HepG2 (cell line): ENCODE measurements at regions of chr17 and their contacts with region 1.

Region 1: DNA sequence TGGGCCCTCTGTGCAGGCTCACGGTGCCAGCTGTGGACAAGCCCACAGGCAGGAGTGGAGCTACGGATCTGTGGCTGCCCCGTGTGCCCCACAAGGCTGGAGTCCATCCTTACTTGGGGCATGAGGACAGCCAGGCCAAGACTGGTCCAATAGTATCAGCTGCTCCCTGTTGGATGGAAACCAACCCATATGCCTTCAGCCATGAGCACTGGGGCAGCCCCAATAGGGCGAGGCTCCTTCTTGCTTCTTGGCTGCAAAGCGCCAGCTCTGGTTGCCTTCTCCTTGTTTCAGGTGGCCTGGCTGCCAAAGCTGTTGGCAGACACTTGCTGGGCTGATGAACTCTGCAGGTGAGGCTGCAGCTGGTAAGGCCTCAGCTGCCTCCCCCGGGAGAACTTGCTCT is 188.0 kb downstream of the ENGASE start:
- DNase-seq: no peak
- ATAC-seq: no peak
- H3K4me3 ChIP-seq: no peak overlapping the region
- H3K27ac ChIP-seq: no peak overlapping the region
- H3K4me1 ChIP-seq: no peaks in the 10 kb centered on the region
- H3K27me3 ChIP-seq: peaks cover 47 to 97% of the 10 kb centered on the region in 2 experiments
- CTCF ChIP-seq: no peak
- EP300 ChIP-seq: no peak
- POLR2A ChIP-seq: no peak
- RAD21 ChIP-seq: no peak

Region 2: DNA sequence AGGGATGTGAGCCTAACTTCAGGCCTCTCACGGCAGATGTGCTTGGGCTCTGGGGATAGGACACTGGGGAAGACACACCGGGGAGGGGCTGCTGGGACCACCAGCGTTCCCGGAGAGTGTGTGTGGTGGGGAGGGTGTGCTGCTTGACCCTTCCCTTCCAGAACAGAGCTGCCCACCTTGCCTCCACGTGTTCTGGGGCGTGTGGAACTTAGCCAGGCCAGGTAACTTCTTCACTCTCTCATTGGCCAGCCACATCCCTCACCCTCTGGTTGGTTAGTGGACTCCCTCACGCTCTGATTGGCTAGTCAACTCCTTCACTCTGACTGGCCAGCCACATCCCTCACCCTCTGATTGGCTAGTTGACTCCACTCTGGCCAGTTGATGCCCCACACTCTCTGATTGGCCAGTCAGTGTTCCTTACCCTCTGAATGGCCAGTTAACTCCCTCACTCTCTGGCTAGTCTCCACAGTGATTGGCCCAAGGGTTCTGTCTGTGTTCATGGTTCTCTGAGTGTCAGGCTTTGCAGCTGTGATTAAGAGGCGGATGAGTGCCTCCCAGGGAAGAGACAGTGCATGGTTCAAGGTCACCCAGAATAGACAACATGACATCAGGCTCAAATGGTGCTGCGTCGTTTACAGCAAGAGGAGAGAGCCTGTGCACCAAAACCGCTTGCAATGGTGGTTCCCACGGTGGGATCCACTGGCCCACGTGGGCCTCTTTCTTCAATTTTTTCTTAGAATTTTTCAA is 1021.2 kb before region 1 on chr17:
- CTCF ChIA-PET with region 1: no interaction called
- POLR2A ChIA-PET with region 1: no interaction called
- in situ Hi-C with region 1: no loop called
- intact Hi-C with region 1: loop called (anchors 10 kb)
- DNase-seq: peak; percentile 96
- ATAC-seq: peak; percentile 91
- H3K4me3 ChIP-seq: no peak overlapping the region
- H3K27ac ChIP-seq: no peak overlapping the region
- H3K4me1 ChIP-seq: peaks cover 53% of the 10 kb centered on the region
- H3K27me3 ChIP-seq: peaks cover 7 to 35% of the 10 kb centered on the region in 2 experiments; a peak in 4 of 5 replicates
- CTCF ChIP-seq: no peak
- EP300 ChIP-seq: peak in 1 of 2 experiments; percentile 57; a peak in 2 of 4 replicates
- POLR2A ChIP-seq: no peak
- RAD21 ChIP-seq: no peak

Region 3: DNA sequence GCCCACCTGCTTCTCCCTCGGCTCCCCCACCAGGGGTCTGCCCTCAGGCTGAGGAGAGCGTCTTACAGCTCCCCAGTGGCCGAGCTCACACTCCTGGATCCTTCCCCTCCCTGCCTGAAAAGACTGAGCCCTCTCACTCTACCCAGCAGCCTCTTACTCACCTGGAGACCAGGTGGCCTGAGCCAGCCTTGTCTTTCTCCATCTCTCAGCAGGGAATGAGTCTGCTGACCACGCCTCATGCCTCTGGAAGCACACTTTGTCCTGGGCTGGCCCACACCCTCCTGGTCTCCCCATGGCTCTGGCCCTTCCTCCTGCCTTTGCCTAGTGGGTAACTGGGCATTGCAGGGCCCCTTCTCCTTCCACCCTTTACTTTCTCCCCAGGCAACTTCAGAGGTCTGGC is 10.8 kb before region 1 on chr17:
- CTCF ChIA-PET with region 1: no interaction called
- POLR2A ChIA-PET with region 1: no interaction called
- in situ Hi-C with region 1: no loop called
- intact Hi-C with region 1: no loop called
- DNase-seq: no peak
- ATAC-seq: no peak
- H3K4me3 ChIP-seq: no peak overlapping the region
- H3K27ac ChIP-seq: no peak overlapping the region
- H3K4me1 ChIP-seq: no peaks in the 10 kb centered on the region
- H3K27me3 ChIP-seq: peaks cover 21 to 89% of the 10 kb centered on the region in 2 experiments
- CTCF ChIP-seq: no peak
- EP300 ChIP-seq: no peak
- POLR2A ChIP-seq: no peak
- RAD21 ChIP-seq: no peak